ENCODE measurements at regions of chr11 and their contacts with region 1.

Region 1: GRCh38 chr11:66386171-66387069 is 14.9 kb upstream of the SLC29A2 start:
- DNase-seq: peak; percentile 71
- H3K4me3 Mint-ChIP-seq: no peak overlapping the region
- H3K27ac Mint-ChIP-seq: peak overlapping the region; percentile 2
- H3K4me1 Mint-ChIP-seq: peaks cover 10% of the 10 kb centered on the region
- H3K27me3 Mint-ChIP-seq: peaks cover 2% of the 10 kb centered on the region

Region 2: GRCh38 chr11:65802841-65803240 is 583.6 kb before region 1 on chr11:
- intact Hi-C with region 1: no loop called
- DNase-seq: no peak
- H3K4me3 Mint-ChIP-seq: no peak overlapping the region
- H3K27ac Mint-ChIP-seq: no peak overlapping the region
- H3K4me1 Mint-ChIP-seq: no peaks in the 10 kb centered on the region
- H3K27me3 Mint-ChIP-seq: peaks cover 19% of the 10 kb centered on the region

Region 3: GRCh38 chr11:66371627-66372415 is 14.6 kb before region 1 on chr11 and contains the start of gene SLC29A2:
- intact Hi-C with region 1: loop called (anchors 1 kb)
- DNase-seq: peak; percentile 71
- H3K4me3 Mint-ChIP-seq: peak within 1 kb of the TSS; percentile 89
- H3K27ac Mint-ChIP-seq: peak within 1 kb of the TSS; percentile 86
- H3K4me1 Mint-ChIP-seq: peaks cover 9% of the 10 kb centered on the region
- H3K27me3 Mint-ChIP-seq: peaks cover 3% of the 10 kb centered on the region
- total RNA-seq, gene SLC29A2: 14.3 and 16.6 TPM in 2 replicates

Region 4: DNA sequence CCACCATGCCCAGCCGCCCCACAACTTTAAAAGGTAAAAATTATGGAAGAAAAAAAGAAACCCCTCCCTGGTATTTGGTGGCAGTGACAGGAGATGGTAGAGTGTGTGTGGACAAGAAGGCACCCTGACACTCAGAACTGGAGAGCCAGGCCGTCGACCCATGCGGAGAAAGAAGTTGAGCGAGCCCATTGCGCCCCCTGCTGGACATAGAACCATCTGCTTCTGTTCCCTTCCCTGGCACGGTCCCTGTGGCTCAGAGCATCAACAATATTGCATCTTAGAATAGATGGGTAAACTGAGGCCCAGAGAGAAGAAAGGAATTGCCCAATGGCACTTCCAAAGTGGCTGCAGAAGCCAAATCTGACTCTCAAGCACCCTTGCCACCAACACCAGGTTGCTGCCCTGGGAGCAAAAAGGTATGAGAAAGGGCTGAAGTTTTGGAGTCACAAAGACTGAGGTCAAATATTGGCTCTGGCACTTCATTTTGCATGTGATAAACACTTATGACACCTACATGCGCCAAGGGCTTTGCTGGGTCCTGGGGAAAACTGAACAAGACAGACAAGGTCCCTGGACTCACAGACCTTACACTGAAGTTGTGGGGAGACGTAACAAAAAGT is 43.7 kb after region 1 on chr11:
- intact Hi-C with region 1: loop called (anchors 1 kb)
- DNase-seq: peak; percentile 49
- H3K4me3 Mint-ChIP-seq: no peak overlapping the region
- H3K27ac Mint-ChIP-seq: no peak overlapping the region
- H3K4me1 Mint-ChIP-seq: peaks cover 7% of the 10 kb centered on the region
- H3K27me3 Mint-ChIP-seq: no peaks in the 10 kb centered on the region